Breast epithelium (tissue), 4 donors: ENCODE measurements at regions of chr2 and their contacts with region 1.

Region 1: GRCh38 chr2:223993621-223994232 is 36.5 kb downstream of the MRPL44 start:
- DNase-seq: peak in 1 of 2 donors; percentile 33
- H3K4me3 ChIP-seq: no peak overlapping the region
- H3K27ac ChIP-seq: no peak overlapping the region
- H3K4me1 ChIP-seq: no peaks in the 10 kb centered on the region
- H3K27me3 ChIP-seq: no peaks in the 10 kb centered on the region
- CTCF ChIP-seq: peak; percentile 72 to 86 (median 74)
- POLR2A ChIP-seq: no peak

Region 2: GRCh38 chr2:224284134-224284946 is 290.6 kb after region 1 on chr2:
- intact Hi-C with region 1: loop called (anchors 10 kb)
- DNase-seq: no peak
- H3K4me3 ChIP-seq: no peak overlapping the region
- H3K27ac ChIP-seq: no peak overlapping the region
- H3K4me1 ChIP-seq: no peaks in the 10 kb centered on the region
- H3K27me3 ChIP-seq: no peaks in the 10 kb centered on the region
- CTCF ChIP-seq: peak; percentile 55 to 83 (median 82)
- POLR2A ChIP-seq: no peak

Region 3: GRCh38 chr2:225177098-225177497 is 1183.4 kb after region 1 on chr2:
- intact Hi-C with region 1: no loop called
- DNase-seq: peak in 1 of 2 donors; percentile 62
- H3K4me3 ChIP-seq: no peak overlapping the region
- H3K27ac ChIP-seq: peak overlapping the region in 1 of 2 donors; percentile 19
- H3K4me1 ChIP-seq: no peaks in the 10 kb centered on the region
- H3K27me3 ChIP-seq: no peaks in the 10 kb centered on the region
- CTCF ChIP-seq: no peak
- POLR2A ChIP-seq: no peak